Mammary epithelial cell (primary cell): ENCODE measurements at regions of chr11 and their contacts with region 1.

Region 1: GRCh38 chr11:15006139-15006759 is 34.1 kb upstream of the CALCA start:
- DNase-seq: peak; percentile 26
- H3K4me3 ChIP-seq: no peak overlapping the region
- H3K27ac ChIP-seq: no peak overlapping the region
- H3K4me1 ChIP-seq: no peaks in the 10 kb centered on the region
- H3K27me3 ChIP-seq: peaks cover 17% of the 10 kb centered on the region
- CTCF ChIP-seq: peak; percentile 47 to 59

Region 2: GRCh38 chr11:14789879-14790484 is 216.3 kb before region 1 on chr11:
- CTCF ChIA-PET with region 1: no interaction called
- dilution Hi-C with region 1: no loop called
- in situ Hi-C with region 1: no loop called
- intact Hi-C with region 1: loop called (anchors 2 kb)
- DNase-seq: no peak
- H3K4me3 ChIP-seq: no peak overlapping the region
- H3K27ac ChIP-seq: no peak overlapping the region
- H3K4me1 ChIP-seq: no peaks in the 10 kb centered on the region
- H3K27me3 ChIP-seq: peaks cover 4% of the 10 kb centered on the region
- CTCF ChIP-seq: peak; percentile 35 to 63

Region 3: DNA sequence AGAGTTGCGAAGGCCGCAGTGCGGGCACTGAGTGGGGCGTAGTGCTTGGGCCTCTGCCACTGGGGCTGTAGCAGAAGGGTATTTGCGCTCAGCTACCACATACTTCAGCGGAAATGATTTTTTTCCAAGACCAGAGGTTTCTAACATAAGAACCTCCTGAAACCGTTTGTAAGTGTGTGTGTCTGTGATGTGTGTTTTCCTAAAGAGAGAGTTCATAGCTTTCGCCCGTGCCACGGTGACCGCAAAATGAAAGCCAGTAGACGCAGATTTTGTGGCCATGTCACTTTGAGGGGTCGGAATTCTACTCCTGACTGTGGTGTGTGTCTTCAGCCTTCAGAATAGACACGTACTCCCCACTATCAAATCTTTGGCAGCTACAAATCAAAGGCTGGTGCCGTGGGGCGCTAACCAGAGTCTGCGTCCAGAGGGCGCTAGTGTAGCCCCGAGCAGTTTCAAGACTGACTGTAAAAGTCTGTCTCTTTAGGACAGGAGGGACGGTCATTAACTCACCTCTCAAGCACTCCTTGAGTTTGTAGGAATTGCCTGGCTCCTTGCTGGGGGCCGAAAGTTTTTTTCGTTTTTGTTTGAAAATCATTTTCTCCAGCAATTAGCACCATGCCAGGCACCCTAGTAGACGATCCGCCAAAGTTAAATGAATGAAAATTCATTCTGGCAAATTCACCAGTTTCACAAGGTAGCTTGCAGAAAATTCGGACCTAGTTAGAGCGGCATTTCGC is 31.6 kb before region 1 on chr11:
- CTCF ChIA-PET with region 1: no interaction called
- dilution Hi-C with region 1: no loop called
- in situ Hi-C with region 1: no loop called
- intact Hi-C with region 1: loop called (anchors 1 kb)
- DNase-seq: peak; percentile 33
- H3K4me3 ChIP-seq: peak overlapping the region in 2 of 3 experiments; percentile 2 to 5
- H3K27ac ChIP-seq: no peak overlapping the region
- H3K4me1 ChIP-seq: peaks cover 18% of the 10 kb centered on the region
- H3K27me3 ChIP-seq: peaks cover 48% of the 10 kb centered on the region
- CTCF ChIP-seq: peak; percentile 84 to 90